ENCODE measurements at regions of chr11 and their contacts with region 1.

Region 1: GRCh38 chr11:447923-448731 is 2.0 kb upstream of the PTDSS2 start:
- DNase-seq: peak; percentile 96
- H3K4me3 ChIP-seq: peak overlapping the region; percentile 74
- H3K27ac ChIP-seq: peak overlapping the region; percentile 68
- H3K4me1 ChIP-seq: peaks cover 37% of the 10 kb centered on the region
- CTCF ChIP-seq: peak; percentile 86

Region 2: GRCh38 chr11:207208-207862 is 240.8 kb before region 1 on chr11 and contains the starts of genes BET1L and RIC8A:
- CTCF ChIA-PET with region 1: no interaction called
- POLR2A ChIA-PET with region 1: interaction called, 5 read pairs
- intact Hi-C with region 1: loop called (anchors 5 kb)
- DNase-seq: peak; percentile 99
- H3K4me3 ChIP-seq: peak within 1 kb of the TSS; percentile 98
- H3K27ac ChIP-seq: peak within 1 kb of the TSS; percentile 97
- H3K4me1 ChIP-seq: peaks cover 26% of the 10 kb centered on the region
- CTCF ChIP-seq: no peak
- total RNA-seq, gene BET1L: 12.3 and 16.2 TPM in 2 replicates
- total RNA-seq, gene RIC8A: 125 and 136 TPM in 2 replicates

Region 3: DNA sequence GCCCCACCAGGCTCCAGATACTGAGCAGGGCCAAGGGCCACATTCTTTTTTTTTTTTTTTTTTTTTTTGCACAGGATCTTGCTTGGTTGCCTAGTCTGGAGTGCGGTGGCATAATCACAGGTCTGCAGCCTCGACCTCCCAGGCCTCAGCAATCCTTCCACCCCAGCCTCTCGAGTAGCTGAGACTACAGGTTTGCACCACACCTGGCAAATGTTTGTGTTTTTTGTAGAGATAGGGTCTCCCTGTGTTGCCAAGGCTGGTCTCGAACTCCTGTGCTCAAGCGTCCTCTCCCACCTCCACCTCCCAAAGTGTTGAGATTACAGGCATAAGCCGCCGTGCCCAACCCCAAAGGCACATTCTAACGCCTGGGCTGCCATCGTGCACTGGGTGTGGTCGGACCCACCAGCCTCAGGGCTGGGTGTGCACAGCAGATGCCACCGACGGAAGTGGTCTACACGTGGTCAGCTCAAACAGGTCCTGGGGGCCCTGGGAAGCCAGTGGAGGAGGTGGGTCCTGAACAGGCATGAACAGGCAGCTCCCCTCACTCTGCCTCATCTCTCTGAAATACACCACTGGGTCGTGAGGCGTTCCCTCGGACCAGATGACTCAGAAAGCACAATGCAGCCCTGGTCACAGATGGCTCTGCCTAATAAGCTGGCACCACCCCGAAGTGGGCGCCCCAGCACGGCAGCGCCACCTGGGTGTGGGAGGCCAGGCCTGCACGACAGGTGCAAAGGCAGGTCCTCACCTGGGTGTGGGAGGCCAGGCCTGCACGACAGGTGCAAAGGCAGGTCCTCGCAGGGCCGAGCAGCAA is 84.0 kb before region 1 on chr11:
- CTCF ChIA-PET with region 1: interaction called, 3 read pairs
- POLR2A ChIA-PET with region 1: no interaction called
- intact Hi-C with region 1: loop called (anchors 1 kb)
- DNase-seq: peak; percentile 74
- H3K4me3 ChIP-seq: no peak overlapping the region
- H3K27ac ChIP-seq: no peak overlapping the region
- H3K4me1 ChIP-seq: no peaks in the 10 kb centered on the region
- CTCF ChIP-seq: peak; percentile 82

Region 4: GRCh38 chr11:506238-506994 is 58.3 kb after region 1 on chr11:
- CTCF ChIA-PET with region 1: no interaction called
- POLR2A ChIA-PET with region 1: no interaction called
- intact Hi-C with region 1: loop called (anchors 2 kb)
- DNase-seq: peak; percentile 98
- H3K4me3 ChIP-seq: peak overlapping the region; percentile 95
- H3K27ac ChIP-seq: peak overlapping the region; percentile 85
- H3K4me1 ChIP-seq: peaks cover 32% of the 10 kb centered on the region
- CTCF ChIP-seq: no peak

Region 5: GRCh38 chr11:535519-536454 is 87.7 kb after region 1 on chr11 and contains the start of gene HRAS:
- CTCF ChIA-PET with region 1: no interaction called
- POLR2A ChIA-PET with region 1: no interaction called
- intact Hi-C with region 1: loop called (anchors 5 kb)
- DNase-seq: peak; percentile 97
- H3K4me3 ChIP-seq: peak within 1 kb of the TSS; percentile 94
- H3K27ac ChIP-seq: peak within 1 kb of the TSS; percentile 80
- H3K4me1 ChIP-seq: peaks cover 32% of the 10 kb centered on the region
- CTCF ChIP-seq: no peak
- total RNA-seq, gene HRAS: 53.0 and 67.8 TPM in 2 replicates

Region 6: DNA sequence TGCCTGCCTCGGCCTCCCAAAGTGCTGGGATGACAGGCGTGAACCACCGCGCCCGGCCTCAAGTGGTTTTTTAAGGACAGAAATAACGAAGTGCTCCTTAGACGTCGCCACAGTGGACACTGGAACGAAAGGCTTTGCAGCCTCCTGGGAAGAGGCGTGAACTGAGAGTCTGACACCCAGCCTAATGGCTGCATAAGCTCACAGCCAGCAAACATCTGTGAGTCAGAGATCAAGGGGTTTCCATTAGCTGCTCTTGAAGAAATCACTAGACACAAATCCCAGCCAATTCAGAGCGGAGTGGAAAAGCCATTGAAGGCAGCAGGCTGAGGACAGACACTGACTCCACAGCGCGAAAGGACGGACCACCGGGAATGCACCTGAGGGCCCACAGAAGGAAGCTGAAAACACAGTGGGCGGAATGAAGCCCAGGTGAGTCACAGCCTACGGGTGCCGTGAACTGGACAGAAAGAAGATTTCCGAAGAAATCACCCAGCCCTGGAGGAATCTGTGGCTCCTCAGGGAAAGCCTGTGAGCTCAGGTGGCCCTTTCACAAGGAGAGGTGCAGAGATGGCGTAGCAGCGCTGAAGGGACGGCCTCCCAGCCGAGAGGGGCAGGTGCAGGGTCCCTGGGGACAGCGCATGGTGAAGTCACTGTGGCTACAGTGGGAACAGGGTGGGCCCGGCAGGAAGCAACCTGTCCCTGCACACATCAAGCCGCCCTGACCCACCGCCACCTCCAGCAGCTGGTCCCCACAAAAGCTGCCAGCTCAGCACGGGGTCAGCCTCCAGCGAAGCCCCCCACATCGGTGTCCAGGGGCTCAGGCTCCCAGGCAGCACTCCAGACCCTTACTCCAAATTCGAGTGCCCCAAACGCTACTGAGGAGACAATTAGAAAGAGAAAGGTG is 100.8 kb after region 1 on chr11:
- CTCF ChIA-PET with region 1: no interaction called
- POLR2A ChIA-PET with region 1: no interaction called
- intact Hi-C with region 1: no loop called
- DNase-seq: peak; percentile 65
- H3K4me3 ChIP-seq: no peak overlapping the region
- H3K27ac ChIP-seq: no peak overlapping the region
- H3K4me1 ChIP-seq: peaks cover 12% of the 10 kb centered on the region
- CTCF ChIP-seq: no peak